ENCODE measurements at regions of chr14 and their contacts with region 1.

Region 1: DNA sequence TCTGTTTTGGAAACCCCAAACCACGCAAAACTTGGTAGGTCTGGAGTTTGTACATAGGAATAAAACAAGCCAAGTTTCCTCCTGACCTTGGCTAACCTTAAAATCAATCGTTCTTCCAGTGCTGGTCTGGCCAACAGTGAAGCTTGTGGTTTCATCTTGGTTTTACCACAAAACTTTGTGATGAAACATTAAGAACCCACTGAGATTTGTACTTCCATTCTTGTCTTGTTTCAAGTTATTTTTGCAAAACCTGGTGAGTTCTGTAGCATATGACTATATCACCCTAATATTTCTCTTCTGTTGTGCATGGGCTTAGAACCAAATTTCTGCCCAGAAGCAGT is 26.4 kb downstream of the SIX1 start:
- H3K4me3 ChIP-seq: no peak overlapping the region
- H3K27ac ChIP-seq: no peak overlapping the region
- H3K4me1 ChIP-seq: peaks cover 15% of the 10 kb centered on the region
- CTCF ChIP-seq: no peak

Region 2: DNA sequence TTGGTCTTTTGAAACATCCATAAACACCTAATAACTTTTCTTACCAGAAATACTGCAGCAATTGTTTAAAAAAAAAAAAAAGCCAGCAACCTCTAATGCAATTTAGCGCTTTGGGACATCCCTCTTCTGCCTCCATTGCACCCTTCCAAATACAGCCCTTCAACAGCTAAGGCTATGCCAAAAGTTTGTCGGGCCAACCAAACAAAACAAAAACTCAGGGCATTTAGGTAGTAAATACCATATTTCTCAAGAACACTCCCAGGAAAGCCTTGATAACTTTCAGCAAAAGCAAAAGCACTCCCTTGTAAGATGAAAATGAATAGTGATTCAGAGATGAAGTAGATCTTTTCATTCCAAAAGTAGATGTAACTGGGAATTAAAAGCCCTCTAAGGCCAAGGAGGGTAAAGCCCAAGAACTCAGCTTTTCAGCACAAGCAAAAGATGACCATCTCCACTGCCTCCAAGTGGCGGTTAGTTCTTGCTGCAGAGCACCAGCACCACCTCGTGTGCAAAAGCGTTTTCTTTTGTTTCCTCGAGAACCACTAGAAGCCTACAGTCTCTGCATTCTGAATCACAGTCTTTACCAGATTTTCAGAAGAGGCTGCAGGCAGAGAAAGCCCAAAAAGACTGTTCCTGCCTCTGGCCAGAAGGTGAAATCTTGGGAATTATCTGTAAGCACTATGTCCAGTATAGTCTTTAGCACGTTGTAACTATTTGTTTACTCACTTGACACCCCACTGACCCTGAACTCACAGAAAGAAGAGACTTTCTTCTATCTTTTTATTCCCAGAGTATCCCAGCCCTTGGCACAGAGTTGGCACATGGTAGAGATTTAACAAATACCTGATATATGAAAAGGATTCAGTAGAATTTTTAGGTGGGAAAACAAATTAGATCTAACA is 60.8 kb before region 1 on chr14:
- CTCF ChIA-PET with region 1: no interaction called
- POLR2A ChIA-PET with region 1: no interaction called
- H3K4me3 ChIP-seq: no peak overlapping the region
- H3K27ac ChIP-seq: no peak overlapping the region
- H3K4me1 ChIP-seq: peaks cover 5% of the 10 kb centered on the region; the same call in 1 of the 2 replicates
- CTCF ChIP-seq: peak; percentile 79

Region 3: DNA sequence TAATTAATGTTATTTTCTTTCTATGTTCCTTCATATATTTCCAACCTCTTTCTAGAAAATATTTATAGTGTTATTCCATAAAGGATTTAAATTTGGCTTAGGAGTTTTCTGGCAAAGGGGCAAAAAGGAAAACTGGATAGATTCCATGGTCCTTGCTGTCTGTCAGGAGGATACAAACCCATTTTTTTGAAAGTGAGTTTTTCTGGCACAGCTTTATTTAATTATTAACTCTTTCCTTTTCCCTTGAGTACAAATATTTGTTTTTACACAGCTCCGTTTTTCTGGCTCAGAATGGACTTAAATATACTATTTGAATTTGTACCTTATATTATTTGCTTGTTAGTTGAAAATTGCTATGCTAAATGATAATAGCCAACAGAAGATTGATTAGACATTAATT is 168.0 kb after region 1 on chr14:
- CTCF ChIA-PET with region 1: no interaction called
- POLR2A ChIA-PET with region 1: no interaction called
- H3K4me3 ChIP-seq: no peak overlapping the region
- H3K27ac ChIP-seq: no peak overlapping the region
- H3K4me1 ChIP-seq: no peaks in the 10 kb centered on the region
- CTCF ChIP-seq: no peak

Region 4: DNA sequence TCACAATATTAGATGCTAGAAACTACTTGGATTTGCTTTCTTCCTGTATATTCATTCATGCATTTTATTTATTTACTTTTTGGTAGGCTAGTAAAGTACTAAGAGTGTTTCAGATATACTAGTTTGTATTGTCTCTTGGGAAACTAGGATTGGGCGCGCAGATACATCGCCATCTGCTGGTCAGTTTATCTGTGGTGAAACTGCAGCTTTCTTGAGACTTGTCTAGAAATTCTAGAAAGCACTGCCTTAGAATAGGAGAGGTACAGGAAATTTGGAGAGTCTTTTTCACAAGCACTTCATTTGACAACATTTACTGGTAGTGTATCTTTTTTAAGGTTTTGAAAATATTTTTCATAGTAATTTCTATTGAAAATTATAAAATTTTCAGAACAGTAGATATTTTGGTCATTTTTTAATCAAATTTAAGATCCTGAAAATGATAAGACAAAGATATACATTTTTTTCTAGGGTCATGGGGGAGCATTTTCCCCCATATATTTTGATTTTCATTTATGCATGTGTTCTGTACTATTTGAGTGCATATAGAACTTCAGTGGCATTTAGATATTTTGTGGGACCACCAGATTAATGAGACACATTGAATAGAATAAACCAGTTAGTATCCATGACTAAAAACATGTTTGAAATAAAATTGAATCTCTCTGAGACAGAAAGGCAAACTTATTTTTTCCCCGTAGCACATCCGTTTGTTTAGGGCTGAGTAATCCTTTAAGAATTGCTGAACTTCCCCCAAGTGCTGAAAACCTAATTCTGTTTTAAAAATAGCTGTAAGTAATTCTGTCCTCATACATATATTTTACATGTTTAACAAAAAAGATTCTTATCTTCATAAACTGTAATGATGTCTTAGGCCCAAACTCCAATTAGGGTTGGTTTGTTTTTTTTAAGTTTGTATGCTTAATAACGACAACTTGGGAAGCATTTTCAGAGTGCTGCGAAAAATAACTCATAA is 402.6 kb after region 1 on chr14:
- CTCF ChIA-PET with region 1: interaction called, 30 read pairs
- POLR2A ChIA-PET with region 1: no interaction called
- H3K4me3 ChIP-seq: no peak overlapping the region
- H3K27ac ChIP-seq: no peak overlapping the region
- H3K4me1 ChIP-seq: no peaks in the 10 kb centered on the region
- CTCF ChIP-seq: peak; percentile 28; the same call in 1 of the 2 replicates

Region 5: DNA sequence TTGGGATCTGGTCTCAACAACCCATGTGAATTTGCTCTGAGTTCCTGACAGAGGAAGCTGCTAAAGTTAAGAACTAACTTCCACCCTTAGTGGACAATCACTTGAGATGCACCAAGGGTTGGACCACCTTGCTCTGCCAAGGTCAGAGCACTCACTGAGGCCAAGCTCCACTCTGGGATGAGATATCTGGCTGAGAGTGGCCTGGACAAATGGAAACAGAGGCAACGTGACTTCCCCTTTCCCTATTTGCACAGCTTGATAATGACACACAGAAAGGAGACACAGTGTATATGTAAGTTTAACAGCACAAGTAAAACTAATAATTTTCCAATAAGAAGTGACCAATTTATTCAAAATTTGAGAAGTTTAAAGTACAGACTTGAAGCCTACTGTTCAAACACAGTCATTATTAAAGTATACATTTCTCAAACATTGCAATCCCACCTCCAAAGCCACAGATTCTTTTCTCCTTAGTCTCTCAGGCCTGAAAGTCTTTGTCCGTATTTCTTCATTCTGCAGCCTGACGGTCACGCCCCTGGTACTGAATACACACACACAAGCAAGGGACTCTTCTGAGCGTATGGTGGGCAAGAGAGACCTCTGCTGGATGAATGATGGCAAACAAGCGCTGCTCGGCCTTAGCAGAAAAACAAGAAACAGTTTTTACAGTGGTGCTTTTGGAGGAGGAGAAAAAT is 629.6 kb after region 1 on chr14:
- CTCF ChIA-PET with region 1: interaction called, 33 read pairs
- POLR2A ChIA-PET with region 1: no interaction called
- H3K4me3 ChIP-seq: no peak overlapping the region
- H3K27ac ChIP-seq: no peak overlapping the region
- H3K4me1 ChIP-seq: peaks cover 2% of the 10 kb centered on the region; the same call in 1 of the 2 replicates
- CTCF ChIP-seq: peak; percentile 71

Measured in HEK293 (cell line).